ENCODE measurements at regions of chr2 and their contacts with region 1.

Region 1: GRCh38 chr2:225282858-225283710 is 116.4 kb upstream of the NYAP2 start:
- H3K4me3 Mint-ChIP-seq: no peak overlapping the region
- H3K27ac Mint-ChIP-seq: no peak overlapping the region
- H3K4me1 Mint-ChIP-seq: no peaks in the 10 kb centered on the region
- H3K27me3 Mint-ChIP-seq: peaks cover 4% of the 10 kb centered on the region

Region 2: GRCh38 chr2:223442847-223443246 is 1840.2 kb before region 1 on chr2:
- intact Hi-C with region 1: no loop called
- H3K4me3 Mint-ChIP-seq: no peak overlapping the region
- H3K27ac Mint-ChIP-seq: no peak overlapping the region
- H3K4me1 Mint-ChIP-seq: no peaks in the 10 kb centered on the region
- H3K27me3 Mint-ChIP-seq: no peaks in the 10 kb centered on the region

Region 3: DNA sequence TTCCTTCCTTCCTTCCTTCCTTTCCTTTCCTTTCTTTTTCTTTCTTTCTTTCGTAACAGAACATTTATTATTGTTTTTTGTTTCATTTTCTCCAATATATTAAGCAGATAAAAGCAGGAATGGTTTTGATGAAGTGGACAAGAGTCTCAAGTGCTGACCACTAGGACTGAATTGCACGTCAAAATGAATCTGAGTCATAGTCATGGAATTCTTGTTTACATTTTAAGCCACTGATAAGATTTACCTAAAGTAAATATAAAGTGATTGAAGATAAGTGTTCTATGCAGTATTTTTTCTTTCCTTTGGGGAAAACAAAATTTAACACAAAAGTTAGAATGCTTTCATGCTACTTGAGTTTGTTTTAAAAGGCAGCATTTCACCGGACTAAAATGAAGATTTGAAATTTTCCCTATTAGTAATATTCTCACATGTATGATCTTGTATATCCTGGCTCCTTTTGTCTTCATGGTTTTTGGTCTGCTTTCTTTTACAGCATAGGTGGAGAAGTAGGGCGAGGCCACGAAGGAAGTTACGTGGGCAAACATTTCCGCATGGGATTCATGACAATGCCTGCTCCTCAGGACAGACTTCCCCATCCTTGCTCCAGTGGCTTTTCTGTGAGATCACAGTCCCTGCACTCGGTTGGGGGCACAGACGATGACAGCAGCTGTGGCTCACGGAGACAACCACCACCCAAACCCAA is 229.9 kb after region 1 on chr2:
- intact Hi-C with region 1: no loop called
- H3K4me3 Mint-ChIP-seq: no peak overlapping the region
- H3K27ac Mint-ChIP-seq: no peak overlapping the region
- H3K4me1 Mint-ChIP-seq: no peaks in the 10 kb centered on the region
- H3K27me3 Mint-ChIP-seq: no peaks in the 10 kb centered on the region

Region 4: GRCh38 chr2:225660262-225661131 is 377.4 kb after region 1 on chr2:
- intact Hi-C with region 1: loop called (anchors 5 kb)
- H3K4me3 Mint-ChIP-seq: no peak overlapping the region
- H3K27ac Mint-ChIP-seq: no peak overlapping the region
- H3K4me1 Mint-ChIP-seq: peaks cover 4% of the 10 kb centered on the region
- H3K27me3 Mint-ChIP-seq: peaks cover 5% of the 10 kb centered on the region

Measured in dendritic cell treated with granulocyte-macrophage colony-stimulating factor and Interleukin-4, amounts not matched to agents 40 ng/mL and 50 ng/mL, for 4 days (primary cell).